ENCODE measurements at regions of chr1 and their contacts with region 1.

Region 1: DNA sequence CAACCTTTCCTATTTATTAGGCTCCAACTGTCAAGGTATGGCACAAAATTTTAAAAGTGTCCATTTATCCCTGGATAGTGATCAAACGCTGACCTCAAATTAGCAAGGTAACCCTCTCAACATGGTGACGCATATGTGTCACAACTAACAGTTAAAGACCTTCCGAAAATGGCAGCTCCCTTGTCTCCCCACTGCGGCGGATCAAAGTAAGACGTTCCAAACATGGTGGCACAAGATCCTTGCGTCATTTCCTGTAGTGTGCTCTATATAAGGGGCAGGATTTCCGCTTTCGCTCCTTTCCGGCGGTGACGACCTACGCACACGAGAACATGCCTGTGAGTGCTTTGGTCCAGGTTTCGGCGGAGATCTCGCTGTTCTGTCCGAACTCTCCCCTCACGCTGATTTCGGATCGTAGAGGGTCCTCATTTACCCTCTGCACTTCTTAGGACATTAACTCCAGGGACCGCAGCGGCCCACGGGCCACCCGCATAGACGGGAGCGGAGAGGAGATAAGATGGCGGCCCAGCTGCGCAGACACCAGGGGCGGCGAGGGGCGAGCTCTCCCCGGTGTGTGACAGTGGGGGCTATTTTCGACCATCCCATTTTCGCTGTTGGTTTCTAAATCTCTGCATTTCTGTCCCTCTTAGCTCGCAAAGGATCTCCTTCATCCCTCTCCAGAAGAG is at the start of gene RPS27:
- DNase-seq: peak; percentile 76 to 97 (median 92)
- ATAC-seq: peak; percentile 90
- H3K4me3 ChIP-seq: peak within 1 kb of the TSS; percentile 82
- H3K4me3 Mint-ChIP-seq: peak within 1 kb of the TSS; percentile 83 to 99 (median 96)
- H3K27ac ChIP-seq: peak within 1 kb of the TSS; percentile 99
- H3K27ac Mint-ChIP-seq: peak within 1 kb of the TSS; percentile 92 to 100 (median 99)
- H3K4me1 ChIP-seq: peaks cover 26 to 34% of the 10 kb centered on the region in 2 donors
- H3K4me1 Mint-ChIP-seq: peaks cover 32 to 62% (median 44%) of the 10 kb centered on the region in 7 donors
- H3K27me3 ChIP-seq: no peaks in the 10 kb centered on the region
- H3K27me3 Mint-ChIP-seq: peaks cover 2 to 8% (median 4%) of the 10 kb centered on the region in 5 donors
- total RNA-seq, gene RPS27: 2,313 to 8,530 (median 5,699) TPM

Region 2: DNA sequence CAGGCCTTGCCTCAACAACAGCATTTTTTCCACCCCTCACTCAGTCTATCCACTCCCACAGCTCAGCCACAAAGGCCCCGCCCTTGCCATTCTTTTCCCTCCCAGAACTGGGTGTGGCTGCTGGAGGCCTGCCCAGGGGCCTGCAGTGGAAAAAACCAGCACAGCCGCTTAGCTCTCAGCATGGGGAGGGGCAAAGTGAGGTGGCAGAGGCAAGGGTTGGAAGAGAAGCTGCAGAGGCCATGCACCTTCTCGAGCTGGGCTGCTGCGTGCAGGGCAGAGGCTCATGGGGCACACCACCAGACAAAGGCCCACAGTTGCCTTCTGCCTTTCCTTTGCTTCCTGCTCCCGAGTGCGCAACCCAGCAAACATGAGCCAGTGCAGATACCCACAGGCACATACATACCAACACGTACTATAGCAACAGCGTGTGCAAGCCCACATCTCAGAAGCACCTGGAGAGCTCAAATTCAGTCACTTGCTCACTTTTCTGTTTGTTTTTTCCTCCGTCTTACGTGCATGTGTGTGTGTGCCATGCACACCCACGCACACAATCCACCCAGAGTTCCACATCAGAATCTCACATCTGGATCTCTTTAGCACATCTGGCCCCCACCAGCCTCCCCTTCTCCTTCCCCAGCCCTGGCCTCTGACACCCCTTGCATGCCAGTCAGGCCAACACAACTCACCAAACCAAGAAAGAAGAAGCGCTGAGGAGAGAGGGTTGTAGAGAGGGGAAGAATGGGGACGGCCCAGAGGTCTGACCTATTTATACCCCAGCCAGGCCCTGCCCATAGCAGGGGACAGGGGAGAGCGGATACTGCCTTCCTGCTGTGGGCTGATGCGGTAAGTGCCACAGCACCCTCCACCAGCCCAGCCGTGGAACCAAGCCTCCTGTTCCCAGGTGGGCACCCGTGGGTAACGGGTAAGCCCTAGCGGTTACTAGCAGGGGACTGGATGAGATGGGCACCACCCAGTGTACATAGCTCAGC is 445.2 kb before region 1 on chr1 and contains the start of gene S100A4:
- CTCF ChIA-PET with region 1: no interaction called
- POLR2A ChIA-PET with region 1: interaction called, 11 read pairs
- intact Hi-C with region 1: no loop called
- DNase-seq: peak; percentile 50 to 93 (median 89)
- ATAC-seq: peak; percentile 84
- H3K4me3 ChIP-seq: peak within 1 kb of the TSS; percentile 69
- H3K4me3 Mint-ChIP-seq: peak within 1 kb of the TSS; percentile 85 to 97 (median 88)
- H3K27ac ChIP-seq: peak within 1 kb of the TSS; percentile 79
- H3K27ac Mint-ChIP-seq: peak within 1 kb of the TSS; percentile 93 to 99 (median 98)
- H3K4me1 ChIP-seq: peaks cover 53 to 69% of the 10 kb centered on the region in 2 donors
- H3K4me1 Mint-ChIP-seq: peaks cover 62 to 87% (median 74%) of the 10 kb centered on the region in 7 donors
- H3K27me3 ChIP-seq: no peaks in the 10 kb centered on the region
- H3K27me3 Mint-ChIP-seq: no peaks in the 10 kb centered on the region
- total RNA-seq, gene S100A4: 54.0 to 766 (median 204) TPM

Region 3: GRCh38 chr1:153727463-153728304 is 262.9 kb before region 1 on chr1 and contains the start of gene INTS3:
- CTCF ChIA-PET with region 1: no interaction called
- POLR2A ChIA-PET with region 1: interaction called, 3 read pairs
- intact Hi-C with region 1: loop called (anchors 1 kb)
- DNase-seq: peak; percentile 84 to 100 (median 99)
- ATAC-seq: peak; percentile 99
- H3K4me3 ChIP-seq: peak within 1 kb of the TSS; percentile 92
- H3K4me3 Mint-ChIP-seq: peak within 1 kb of the TSS; percentile 82 to 97 (median 92)
- H3K27ac ChIP-seq: peak within 1 kb of the TSS; percentile 94
- H3K27ac Mint-ChIP-seq: peak within 1 kb of the TSS; percentile 89 to 98 (median 95)
- H3K4me1 ChIP-seq: peaks cover 11 to 15% of the 10 kb centered on the region in 2 donors
- H3K4me1 Mint-ChIP-seq: peaks cover 7 to 35% (median 32%) of the 10 kb centered on the region in 7 donors
- H3K27me3 ChIP-seq: no peaks in the 10 kb centered on the region
- H3K27me3 Mint-ChIP-seq: peaks cover 0 to 2% (median 0%) of the 10 kb centered on the region in 5 donors
- total RNA-seq, gene INTS3: 43.6 to 68.1 (median 56.8) TPM

Region 4: DNA sequence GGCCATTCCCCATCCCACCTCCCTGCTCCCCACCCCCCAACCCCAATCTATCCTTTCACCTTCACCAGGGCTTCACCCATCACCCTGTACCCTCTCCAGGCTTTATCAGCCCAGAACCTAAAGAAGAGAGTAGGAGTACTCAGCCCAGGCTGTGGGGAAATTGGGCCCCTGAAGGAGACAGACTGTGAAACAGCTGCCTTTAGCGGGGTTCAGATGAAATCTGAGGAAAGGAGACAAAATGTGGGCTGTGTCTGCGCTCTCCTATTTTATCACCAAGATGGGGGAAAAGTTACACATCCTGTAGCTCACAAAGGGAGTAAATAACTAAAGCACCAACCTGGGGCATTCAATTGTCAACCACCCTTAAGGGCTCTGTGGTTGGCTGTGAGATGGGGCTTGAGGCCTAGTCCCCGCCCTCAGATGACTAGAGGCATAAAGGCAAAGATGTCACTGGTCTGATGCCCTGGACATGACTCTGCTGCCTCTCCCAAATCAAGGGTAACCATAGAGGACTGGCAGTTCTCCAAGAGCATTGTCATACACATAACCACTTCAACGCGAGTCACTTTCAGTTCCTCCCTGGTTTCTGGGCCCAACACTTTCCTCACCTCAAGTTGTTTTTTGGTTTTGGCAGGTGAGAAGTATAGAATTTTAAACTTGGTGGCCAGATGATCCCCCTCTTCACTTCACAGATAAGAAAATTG is 185.4 kb before region 1 on chr1:
- CTCF ChIA-PET with region 1: interaction called, 5 read pairs
- POLR2A ChIA-PET with region 1: interaction called, 29 read pairs
- intact Hi-C with region 1: no loop called
- DNase-seq: peak in 8 of 9 donors; percentile 37 to 82 (median 51)
- ATAC-seq: peak; percentile 98
- H3K4me3 ChIP-seq: no peak overlapping the region
- H3K4me3 Mint-ChIP-seq: peak overlapping the region in 8 of 10 donors; percentile 0 to 47 (median 34)
- H3K27ac ChIP-seq: peak overlapping the region; percentile 53
- H3K27ac Mint-ChIP-seq: peak overlapping the region; percentile 28 to 97 (median 83)
- H3K4me1 ChIP-seq: peaks cover 9 to 30% of the 10 kb centered on the region in 2 donors
- H3K4me1 Mint-ChIP-seq: peaks cover 23 to 43% (median 32%) of the 10 kb centered on the region in 7 donors
- H3K27me3 ChIP-seq: no peaks in the 10 kb centered on the region
- H3K27me3 Mint-ChIP-seq: no peaks in the 10 kb centered on the region

Region 5: GRCh38 chr1:153967082-153968000 is 23.3 kb before region 1 on chr1 and contains the start of gene CREB3L4:
- CTCF ChIA-PET with region 1: interaction called, 6 read pairs
- POLR2A ChIA-PET with region 1: interaction called, 47 read pairs
- intact Hi-C with region 1: loop called (anchors 1 kb)
- DNase-seq: peak; percentile 68 to 89 (median 84)
- ATAC-seq: peak; percentile 91
- H3K4me3 ChIP-seq: peak within 1 kb of the TSS; percentile 89
- H3K4me3 Mint-ChIP-seq: peak within 1 kb of the TSS; percentile 83 to 97 (median 92)
- H3K27ac ChIP-seq: peak within 1 kb of the TSS; percentile 79
- H3K27ac Mint-ChIP-seq: peak within 1 kb of the TSS; percentile 87 to 99 (median 94)
- H3K4me1 ChIP-seq: peaks cover 32 to 40% of the 10 kb centered on the region in 2 donors
- H3K4me1 Mint-ChIP-seq: peaks cover 27 to 72% (median 57%) of the 10 kb centered on the region in 7 donors
- H3K27me3 ChIP-seq: no peaks in the 10 kb centered on the region
- H3K27me3 Mint-ChIP-seq: no peaks in the 10 kb centered on the region
- total RNA-seq, gene CREB3L4: 4.6 to 8.4 (median 7.0) TPM

Region 6: DNA sequence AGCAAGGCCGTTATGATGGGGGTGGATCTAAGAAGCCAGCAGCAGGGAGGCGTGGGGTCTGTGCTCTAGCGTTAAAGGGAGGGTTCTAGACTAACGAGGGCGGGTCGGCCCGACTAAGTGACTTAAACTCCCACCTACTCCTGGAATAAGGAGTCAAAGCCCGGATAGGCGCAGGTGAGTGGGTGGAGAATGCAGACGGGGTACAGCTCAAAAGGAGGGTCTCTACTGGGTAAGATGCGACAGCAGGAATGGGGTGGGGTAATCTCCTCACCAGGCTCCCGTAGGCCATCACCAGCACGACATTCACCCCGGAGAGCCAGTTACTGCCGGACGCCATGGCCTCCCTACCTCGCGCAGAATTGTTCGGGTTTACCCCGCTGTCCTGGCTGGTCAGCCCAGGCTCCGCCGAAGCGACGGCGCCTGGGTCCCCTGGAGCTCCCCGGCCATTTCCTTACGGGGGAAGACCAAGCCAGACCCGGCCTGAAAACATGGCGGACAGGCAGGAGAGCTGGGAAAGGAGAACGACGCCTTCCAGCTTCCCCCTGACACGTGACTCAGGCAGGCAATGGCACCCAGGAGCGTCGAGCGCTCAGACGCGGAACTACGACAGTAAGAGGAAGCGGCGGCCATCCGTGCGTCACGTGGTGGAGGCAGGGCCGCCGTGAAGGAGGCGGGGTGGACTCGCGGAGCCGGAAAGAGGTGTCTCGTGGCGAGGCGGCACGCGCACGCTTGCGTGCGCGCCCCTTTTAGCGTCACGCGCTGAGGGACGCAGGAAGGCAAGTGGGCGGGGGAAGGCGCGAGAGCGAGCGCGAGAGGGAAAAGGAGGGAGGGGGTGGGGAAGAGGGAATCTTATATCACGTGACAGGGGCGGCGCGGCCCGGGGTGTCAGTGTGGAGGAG is 229.7 kb after region 1 on chr1 and contains the start of gene UBAP2L:
- CTCF ChIA-PET with region 1: no interaction called
- POLR2A ChIA-PET with region 1: interaction called, 12 read pairs
- intact Hi-C with region 1: loop called (anchors 1 kb)
- DNase-seq: peak; percentile 92 to 99 (median 99)
- ATAC-seq: peak; percentile 91
- H3K4me3 ChIP-seq: peak within 1 kb of the TSS; percentile 95
- H3K4me3 Mint-ChIP-seq: peak within 1 kb of the TSS; percentile 83 to 100 (median 98)
- H3K27ac ChIP-seq: peak within 1 kb of the TSS; percentile 99
- H3K27ac Mint-ChIP-seq: peak within 1 kb of the TSS; percentile 96 to 100 (median 99)
- H3K4me1 ChIP-seq: peaks cover 42 to 45% of the 10 kb centered on the region in 2 donors
- H3K4me1 Mint-ChIP-seq: peaks cover 46 to 76% (median 64%) of the 10 kb centered on the region in 7 donors
- H3K27me3 ChIP-seq: no peaks in the 10 kb centered on the region
- H3K27me3 Mint-ChIP-seq: peaks cover 0 to 4% (median 0%) of the 10 kb centered on the region in 5 donors
- total RNA-seq, gene UBAP2L: 183 to 235 (median 189) TPM

Measured in naive thymus-derived CD4-positive, alpha-beta T cell (primary cell).